Heart right ventricle (tissue), 16 donors: ENCODE measurements at regions of chr16 and their contacts with region 1.

Region 1: DNA sequence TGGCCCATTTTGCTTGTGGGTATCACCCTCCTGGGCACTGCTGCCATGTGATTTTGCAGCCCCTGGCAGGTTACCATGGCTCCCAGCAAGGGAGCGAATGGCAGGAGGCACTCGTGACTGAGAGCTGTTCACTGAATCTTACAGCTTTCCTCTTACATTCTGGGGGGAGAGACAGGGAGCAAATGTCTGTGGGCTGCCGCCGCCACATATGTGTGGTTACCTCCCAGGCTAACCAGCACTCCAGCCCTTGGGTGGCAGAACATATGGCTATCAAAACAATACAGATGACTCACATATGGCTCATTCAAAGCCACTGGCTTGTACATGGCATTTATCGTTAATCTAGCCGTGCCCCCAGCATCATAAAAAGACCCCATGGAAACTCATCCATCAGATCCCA is 19.8 kb downstream of the GTF3C1 start:
- DNase-seq: no peak
- ATAC-seq: peak in 1 of 8 donors; percentile 10
- H3K4me3 ChIP-seq: no peak overlapping the region
- H3K27ac ChIP-seq: peak overlapping the region in 9 of 10 donors; percentile 18 to 95 (median 49)
- H3K4me1 ChIP-seq: peaks cover 0 to 59% (median 19%) of the 10 kb centered on the region in 9 donors
- H3K27me3 ChIP-seq: no peaks in the 10 kb centered on the region
- CTCF ChIP-seq: no peak

Region 2: DNA sequence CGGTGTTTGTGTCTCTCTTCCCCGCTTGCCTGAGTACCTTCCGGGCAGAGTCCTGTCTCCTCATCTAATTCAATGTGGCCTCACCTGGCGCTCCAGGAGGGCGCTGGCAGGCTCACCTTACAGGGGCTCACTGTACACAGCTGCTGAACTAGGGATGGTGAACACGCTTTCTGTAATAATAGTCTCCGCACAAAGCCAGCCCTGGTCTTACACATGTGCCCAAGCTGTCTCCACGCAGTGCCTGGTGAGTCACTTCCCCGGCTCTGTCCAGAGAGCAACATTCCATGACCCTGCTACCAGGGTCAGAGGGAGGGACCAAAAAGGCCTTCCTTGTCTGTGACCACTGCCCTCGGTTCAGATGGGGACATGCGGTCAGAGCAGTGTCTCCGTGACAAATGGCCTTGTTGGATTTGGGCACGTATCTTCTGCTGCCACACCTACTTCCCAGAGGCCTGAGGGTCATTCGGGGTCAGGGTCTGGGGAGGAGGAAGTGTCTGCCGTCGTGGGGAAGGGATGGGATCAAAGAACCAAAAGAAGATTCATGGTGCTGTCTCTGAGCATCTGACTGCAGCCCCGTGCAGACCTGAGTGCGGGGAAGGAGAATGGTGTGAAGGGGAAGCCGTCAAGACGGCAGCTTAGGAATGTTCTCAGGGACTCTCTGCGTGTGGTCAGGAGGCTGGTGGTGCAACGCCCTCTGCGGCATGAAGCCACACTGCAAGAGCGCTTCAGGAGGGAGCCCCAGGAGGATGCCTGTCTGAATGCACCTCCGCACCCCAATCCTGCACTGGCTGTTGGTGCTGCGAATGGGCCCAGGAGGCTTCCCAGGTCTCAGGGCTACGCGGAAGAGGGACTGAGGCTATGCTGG is 59.2 kb before region 1 on chr16:
- intact Hi-C with region 1: loop called in 1 of 10 experiments (anchors 10 kb)
- DNase-seq: no peak
- ATAC-seq: peak in 6 of 8 donors; percentile 36 to 70 (median 54)
- H3K4me3 ChIP-seq: no peak overlapping the region
- H3K27ac ChIP-seq: peak overlapping the region in 1 of 10 donors; percentile 29
- H3K4me1 ChIP-seq: peaks cover 0 to 11% (median 0%) of the 10 kb centered on the region in 9 donors
- H3K27me3 ChIP-seq: no peaks in the 10 kb centered on the region
- CTCF ChIP-seq: no peak

Region 3: DNA sequence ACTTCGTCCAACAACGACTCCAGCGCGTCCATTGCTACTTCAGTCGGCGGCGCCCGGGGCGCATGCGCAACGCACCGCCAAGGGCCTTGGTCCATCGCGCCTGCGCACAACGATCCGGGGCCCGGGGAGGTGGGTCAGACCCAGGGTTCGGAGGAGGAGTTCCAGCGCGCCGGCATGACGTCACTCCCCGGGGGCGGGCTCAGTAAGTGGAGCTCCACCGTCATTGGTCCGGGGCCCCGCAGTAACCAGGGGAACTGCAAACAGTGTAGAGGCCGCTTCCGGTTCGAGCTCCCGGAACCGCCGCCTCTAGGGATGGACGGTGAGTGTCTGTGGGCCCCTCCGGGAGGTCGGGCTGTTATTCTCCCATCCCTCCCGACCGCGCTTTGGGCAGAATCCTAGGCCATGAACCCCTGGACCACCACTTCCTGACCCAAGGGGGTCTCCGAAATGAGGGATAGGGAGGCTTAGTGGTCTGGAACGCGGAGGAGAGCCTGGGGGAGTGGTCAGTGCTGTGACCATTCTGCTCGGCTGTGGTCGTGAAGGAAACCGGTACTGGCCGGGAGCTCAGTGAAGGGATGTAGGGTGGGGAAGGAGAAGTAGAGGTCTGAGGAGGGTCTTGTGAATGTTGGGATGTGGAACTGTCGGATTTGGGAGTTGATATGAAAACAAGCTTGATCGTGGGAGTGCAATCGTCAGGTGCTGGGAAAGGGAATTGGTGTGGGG is 20.1 kb after region 1 on chr16 and contains the starts of genes GTF3C1 and KATNIP:
- intact Hi-C with region 1: loop called in 1 of 10 experiments (anchors 2 kb)
- DNase-seq: peak; percentile 100
- ATAC-seq: peak; percentile 99 to 100 (median 100)
- H3K4me3 ChIP-seq: peak within 1 kb of the TSS; percentile 53 to 93 (median 82)
- H3K27ac ChIP-seq: peak within 1 kb of the TSS; percentile 65 to 92 (median 87)
- H3K4me1 ChIP-seq: peaks cover 8 to 46% (median 39%) of the 10 kb centered on the region in 9 donors
- H3K27me3 ChIP-seq: no peaks in the 10 kb centered on the region
- CTCF ChIP-seq: no peak
- total RNA-seq, gene GTF3C1: 48.1 to 84.5 (median 62.8) TPM
- total RNA-seq, gene KATNIP: 8.6 to 25.0 (median 16.8) TPM